Prostate gland (tissue), 2 donors: ENCODE measurements at regions of chr11 and their contacts with region 1.

Region 1: GRCh38 chr11:35305670-35306382 is 113.5 kb downstream of the SLC1A2 start:
- DNase-seq: peak; percentile 16
- H3K4me3 ChIP-seq: no peak overlapping the region
- H3K27ac ChIP-seq: peak overlapping the region in 1 of 2 donors; percentile 42
- H3K4me1 ChIP-seq: no peaks in the 10 kb centered on the region
- H3K27me3 ChIP-seq: no peaks in the 10 kb centered on the region
- CTCF ChIP-seq: peak in 3 of 4 experiments; percentile 17 to 53 (median 44)
- POLR2A ChIP-seq: no peak

Region 2: DNA sequence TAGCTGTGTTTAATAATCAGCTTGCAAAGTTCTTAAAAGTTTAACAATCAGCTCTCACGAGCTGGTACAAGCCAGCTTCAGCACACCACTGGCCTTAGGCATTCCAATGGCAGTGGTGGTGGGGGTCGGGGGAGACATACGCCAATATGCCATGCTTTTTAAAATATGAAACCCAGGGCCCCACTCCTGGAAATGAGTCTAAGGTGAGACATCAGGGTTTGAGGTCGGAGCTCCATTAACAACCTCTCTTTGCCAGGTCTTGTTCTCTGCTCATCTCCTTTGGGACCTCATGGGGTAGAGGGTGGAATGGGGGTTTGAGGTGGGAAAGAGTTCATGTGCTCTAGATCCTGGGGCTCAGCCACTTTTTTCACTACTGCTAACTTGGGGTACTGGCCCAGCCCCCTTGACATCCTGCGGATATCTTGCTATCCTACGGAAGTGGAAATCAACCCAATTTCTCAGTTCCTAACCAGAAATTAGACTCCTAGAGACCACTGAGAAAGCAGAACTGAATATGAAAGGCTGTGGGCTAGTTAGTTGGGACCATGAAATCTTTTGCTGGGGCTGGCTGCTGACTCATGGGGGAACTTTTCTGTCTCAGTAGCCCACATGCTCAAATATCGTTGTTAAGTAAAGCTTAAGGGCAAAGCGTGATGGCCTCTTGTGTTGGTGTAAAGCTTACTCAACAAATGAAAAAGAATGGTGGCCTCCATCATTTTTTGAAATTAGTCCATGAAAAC is 299.3 kb before region 1 on chr11:
- intact Hi-C with region 1: loop called (anchors 10 kb)
- DNase-seq: no peak
- H3K4me3 ChIP-seq: no peak overlapping the region
- H3K27ac ChIP-seq: no peak overlapping the region
- H3K4me1 ChIP-seq: peaks cover 11% of the 10 kb centered on the region
- H3K27me3 ChIP-seq: no peaks in the 10 kb centered on the region
- CTCF ChIP-seq: no peak
- POLR2A ChIP-seq: no peak

Region 3: GRCh38 chr11:36411202-36411640 is 1105.4 kb after region 1 on chr11:
- intact Hi-C with region 1: no loop called
- DNase-seq: no peak
- H3K4me3 ChIP-seq: no peak overlapping the region
- H3K27ac ChIP-seq: no peak overlapping the region
- H3K4me1 ChIP-seq: no peaks in the 10 kb centered on the region
- H3K27me3 ChIP-seq: peaks cover 2% of the 10 kb centered on the region
- CTCF ChIP-seq: no peak
- POLR2A ChIP-seq: no peak